Panc1 (cell line): ENCODE measurements at regions of chr6 and their contacts with region 1.

Region 1: DNA sequence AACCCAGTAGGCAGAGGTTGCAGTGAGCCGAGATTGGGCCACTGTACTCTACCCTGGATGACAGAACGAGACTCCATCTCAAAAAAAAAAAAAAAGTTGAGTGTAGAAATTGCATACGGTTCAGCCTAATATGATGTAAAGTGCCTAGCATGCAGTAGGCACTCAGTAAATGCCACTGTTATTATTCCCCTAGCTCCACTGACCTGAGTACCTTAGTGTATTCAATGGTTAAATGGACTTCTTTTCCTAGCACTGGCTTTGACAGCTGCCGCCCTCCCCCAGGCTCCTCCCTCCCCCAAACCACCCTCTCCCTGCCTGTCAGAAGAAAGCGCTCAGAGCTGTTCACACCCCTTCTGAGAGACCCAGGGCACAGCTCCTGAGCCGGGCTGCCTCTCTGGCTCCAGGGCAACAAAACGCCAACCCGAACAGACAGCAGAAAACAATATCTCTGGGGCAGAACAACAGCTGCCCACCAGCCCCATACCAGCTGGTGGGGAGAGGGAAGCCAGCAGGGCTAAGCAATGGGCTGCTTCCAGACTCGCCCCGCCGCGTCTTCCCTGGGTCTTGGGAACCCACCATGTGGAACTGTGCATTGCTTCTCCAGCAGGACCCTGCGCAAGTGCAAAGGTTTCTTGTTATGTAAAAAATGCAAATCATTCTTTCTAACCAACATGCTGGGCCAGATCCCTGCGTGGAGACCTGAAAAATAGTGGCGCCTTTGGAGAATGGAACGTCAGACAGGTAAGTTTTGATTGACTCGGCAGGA is 4.5 kb downstream of the CPNE5 start:
- DNase-seq: no peak
- ATAC-seq: no peak
- H3K4me3 ChIP-seq: no peak overlapping the region
- H3K27ac ChIP-seq: no peak overlapping the region
- H3K4me1 ChIP-seq: no peaks in the 10 kb centered on the region
- H3K27me3 ChIP-seq: no peaks in the 10 kb centered on the region; the same call in 1 of the 2 replicates
- CTCF ChIP-seq: no peak

Region 2: DNA sequence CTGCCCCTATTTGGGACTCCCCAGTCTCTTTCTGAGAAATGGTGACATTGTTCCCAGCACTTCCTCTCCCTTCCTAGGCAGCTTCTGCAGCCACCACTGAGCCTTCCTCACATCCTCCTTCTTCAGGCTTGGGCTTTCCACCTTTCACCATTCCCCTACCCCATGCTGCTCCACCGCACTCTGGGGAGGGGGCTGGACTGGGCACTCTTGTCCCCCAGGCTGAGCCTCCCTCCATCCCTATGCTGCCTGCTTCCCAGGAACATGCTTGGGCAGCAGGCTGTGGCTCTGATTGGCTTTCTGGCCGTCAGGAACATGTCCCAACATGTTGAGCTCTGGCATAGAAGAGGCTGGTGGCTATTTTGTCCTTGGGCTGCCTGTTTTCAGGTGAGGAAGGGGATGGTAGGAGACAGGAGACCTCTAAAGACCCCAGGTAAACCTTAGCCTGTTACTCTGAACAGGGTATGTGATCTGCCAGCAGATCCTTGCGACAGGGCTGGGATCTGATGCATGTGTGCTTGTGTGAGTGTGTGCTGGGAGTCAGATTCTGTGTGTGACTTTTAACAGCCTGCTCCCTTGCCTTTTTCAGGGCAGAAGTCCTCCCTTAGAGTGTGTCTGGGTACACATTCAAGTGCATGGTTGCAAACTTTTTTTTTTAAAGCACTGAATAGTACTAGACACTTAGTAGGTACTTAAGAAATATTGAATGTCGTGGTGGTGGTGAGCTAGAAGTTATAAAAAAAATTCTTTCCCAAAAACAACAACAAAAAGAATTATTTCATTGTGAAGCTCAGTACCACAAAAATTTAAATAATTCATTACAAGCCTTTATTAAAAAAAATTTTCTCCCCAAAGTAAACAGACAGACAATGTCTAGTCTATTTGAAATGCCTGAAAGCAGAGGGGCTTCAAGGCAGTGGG is 158.4 kb before region 1 on chr6:
- CTCF ChIA-PET with region 1: no interaction called
- POLR2A ChIA-PET with region 1: no interaction called
- in situ Hi-C with region 1: no loop called
- intact Hi-C with region 1: no loop called
- DNase-seq: no peak
- ATAC-seq: no peak
- H3K4me3 ChIP-seq: no peak overlapping the region
- H3K27ac ChIP-seq: no peak overlapping the region; the same call in 1 of the 2 replicates
- H3K4me1 ChIP-seq: peaks cover 19% of the 10 kb centered on the region
- H3K27me3 ChIP-seq: no peaks in the 10 kb centered on the region
- CTCF ChIP-seq: no peak

Region 3: GRCh38 chr6:36851149-36851614 is 16.4 kb after region 1 on chr6:
- CTCF ChIA-PET with region 1: no interaction called
- POLR2A ChIA-PET with region 1: no interaction called
- in situ Hi-C with region 1: no loop called
- intact Hi-C with region 1: no loop called
- DNase-seq: no peak
- ATAC-seq: no peak; the same call in 1 of the 2 replicates
- H3K4me3 ChIP-seq: no peak overlapping the region
- H3K27ac ChIP-seq: no peak overlapping the region
- H3K4me1 ChIP-seq: no peaks in the 10 kb centered on the region; the same call in 1 of the 2 replicates
- H3K27me3 ChIP-seq: no peaks in the 10 kb centered on the region
- CTCF ChIP-seq: peak; percentile 87

Region 4: GRCh38 chr6:37262446-37263026 is 427.8 kb after region 1 on chr6:
- CTCF ChIA-PET with region 1: interaction called, 18 read pairs
- POLR2A ChIA-PET with region 1: no interaction called
- in situ Hi-C with region 1: no loop called
- intact Hi-C with region 1: no loop called
- DNase-seq: no peak
- ATAC-seq: no peak
- H3K4me3 ChIP-seq: no peak overlapping the region
- H3K27ac ChIP-seq: no peak overlapping the region
- H3K4me1 ChIP-seq: peaks cover 9% of the 10 kb centered on the region; the same call in 1 of the 2 replicates
- H3K27me3 ChIP-seq: no peaks in the 10 kb centered on the region
- CTCF ChIP-seq: no peak